ENCODE measurements at regions of chr2 and their contacts with region 1.

Region 1: GRCh38 chr2:205903638-205904037 is 182.3 kb downstream of the INO80D start:
- DNase-seq: peak; percentile 51
- ATAC-seq: peak; percentile 100
- H3K4me3 ChIP-seq: no peak overlapping the region
- H3K27ac ChIP-seq: no peak overlapping the region
- H3K4me1 ChIP-seq: no peaks in the 10 kb centered on the region
- H3K27me3 ChIP-seq: no peaks in the 10 kb centered on the region
- CTCF ChIP-seq: peak; percentile 48 to 76 (median 71); a peak in 5 of 6 replicates
- POLR2A ChIP-seq: no peak
- RAD21 ChIP-seq: peak; percentile 58

Region 2: GRCh38 chr2:205947621-205948495 is 44.2 kb after region 1 on chr2:
- CTCF ChIA-PET with region 1: interaction called, 3 read pairs
- POLR2A ChIA-PET with region 1: no interaction called
- RAD21 ChIA-PET with region 1: no interaction called
- intact Hi-C with region 1: loop called (anchors 1 kb)
- DNase-seq: peak; percentile 33
- ATAC-seq: peak; percentile 85
- H3K4me3 ChIP-seq: no peak overlapping the region
- H3K27ac ChIP-seq: no peak overlapping the region
- H3K4me1 ChIP-seq: peaks cover 0 to 17% of the 10 kb centered on the region in 2 experiments; a peak in 2 of 4 replicates
- H3K27me3 ChIP-seq: no peaks in the 10 kb centered on the region
- CTCF ChIP-seq: peak; percentile 81 to 95 (median 91)
- POLR2A ChIP-seq: no peak
- RAD21 ChIP-seq: peak; percentile 88

Measured in HCT116 (cell line).